ENCODE measurements at regions of chr3 and their contacts with region 1.

Region 1: DNA sequence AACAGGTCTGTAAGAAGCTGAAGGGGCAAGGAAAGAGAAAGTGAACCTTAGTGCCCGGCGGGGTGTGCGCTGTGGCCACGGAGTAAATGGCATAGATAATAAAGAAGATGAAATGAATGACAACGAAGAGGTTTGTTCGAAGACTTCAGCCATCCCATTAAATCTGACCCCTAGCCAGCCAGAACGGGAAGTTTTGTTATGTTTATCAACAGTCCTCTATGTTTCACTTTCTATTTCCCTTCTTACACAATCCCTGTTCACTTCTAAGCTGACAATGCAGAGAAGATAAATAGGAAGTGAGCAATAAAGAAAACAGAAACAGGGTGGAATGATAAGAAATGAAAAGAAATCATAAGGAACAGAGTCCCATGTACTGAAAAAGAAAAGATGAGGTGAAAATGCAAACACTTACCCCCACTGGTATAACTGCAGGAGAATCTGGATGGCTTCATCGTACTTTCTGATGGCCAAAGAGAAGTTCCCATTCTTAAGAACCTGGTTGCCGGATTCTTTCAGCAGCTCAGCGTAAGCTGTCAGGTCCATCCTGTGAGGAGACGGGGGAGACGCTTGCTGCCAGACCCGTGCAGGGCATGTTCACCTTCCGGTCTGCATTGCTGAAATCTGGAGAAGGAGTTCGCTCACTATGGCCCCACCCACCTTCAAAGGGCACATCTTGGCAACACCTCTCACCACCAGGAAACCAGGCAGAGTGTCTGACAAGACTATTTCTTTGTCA is 36.8 kb downstream of the TRANK1 start:
- DNase-seq: no peak
- ATAC-seq: peak; percentile 33 to 59
- H3K4me3 ChIP-seq: peak overlapping the region; percentile 49 to 59 (median 54)
- H3K27ac ChIP-seq: peak overlapping the region; percentile 60 to 67 (median 63)
- H3K4me1 ChIP-seq: peaks cover 0 to 3% of the 10 kb centered on the region in 2 donors
- H3K27me3 ChIP-seq: no peaks in the 10 kb centered on the region
- CTCF ChIP-seq: no peak
- POLR2A ChIP-seq: no peak

Region 2: DNA sequence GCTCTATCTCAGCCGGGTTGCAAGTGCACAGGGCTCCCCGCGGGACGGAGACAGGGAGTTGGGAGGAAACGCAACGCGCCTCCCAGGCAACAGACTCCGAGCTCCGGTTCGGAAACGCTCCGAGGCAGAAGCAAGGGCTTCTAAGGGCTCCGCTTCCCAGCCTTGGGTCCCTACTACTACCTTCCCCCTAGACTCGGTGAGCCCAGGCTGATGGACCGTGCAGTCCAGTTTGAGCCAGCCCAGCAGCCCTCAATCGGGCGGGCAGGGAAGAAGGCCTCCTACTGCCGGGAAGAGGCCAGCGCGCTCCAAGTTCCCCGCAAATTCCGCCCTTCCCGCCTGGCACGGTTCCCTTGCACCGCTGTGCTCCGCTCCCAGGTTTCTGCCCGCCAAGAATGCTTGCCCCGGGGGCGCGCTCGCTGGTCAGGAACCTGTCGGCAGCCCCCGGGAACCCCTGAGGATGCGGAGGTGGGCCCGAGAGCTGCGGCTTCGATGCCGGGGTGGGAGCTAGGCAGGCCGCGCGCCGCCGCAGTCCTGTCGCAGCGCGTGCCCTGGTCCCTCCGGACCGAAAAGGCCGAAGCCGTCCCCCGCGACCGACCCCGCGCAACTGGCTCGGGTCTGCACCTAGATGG is 36.0 kb after region 1 on chr3:
- in situ Hi-C with region 1: no loop called
- intact Hi-C with region 1: loop called (anchors 5 kb)
- DNase-seq: no peak
- ATAC-seq: peak; percentile 62 to 66
- H3K4me3 ChIP-seq: peak overlapping the region; percentile 63 to 82 (median 68)
- H3K27ac ChIP-seq: peak overlapping the region in 3 of 4 donors; percentile 16 to 53 (median 39)
- H3K4me1 ChIP-seq: peaks cover 0 to 12% of the 10 kb centered on the region in 2 donors
- H3K27me3 ChIP-seq: peaks cover 5 to 27% (median 9%) of the 10 kb centered on the region in 3 donors
- CTCF ChIP-seq: no peak
- POLR2A ChIP-seq: no peak

Region 3: GRCh38 chr3:37855363-37855970 is 947.4 kb after region 1 on chr3:
- in situ Hi-C with region 1: no loop called
- intact Hi-C with region 1: no loop called
- DNase-seq: peak; percentile 40 to 67
- ATAC-seq: peak in 1 of 2 donors; percentile 61
- H3K4me3 ChIP-seq: no peak overlapping the region
- H3K27ac ChIP-seq: no peak overlapping the region
- H3K4me1 ChIP-seq: peaks cover 0 to 3% of the 10 kb centered on the region in 2 donors
- H3K27me3 ChIP-seq: no peaks in the 10 kb centered on the region
- CTCF ChIP-seq: peak; percentile 77 to 93 (median 89)
- POLR2A ChIP-seq: no peak